Naive thymus-derived CD4-positive, alpha-beta T cell (primary cell): ENCODE measurements at regions of chr3 and their contacts with region 1.

Region 1: GRCh38 chr3:187738331-187739093 is 6.8 kb downstream of the BCL6 start:
- DNase-seq: peak in 8 of 9 donors; percentile 39 to 70 (median 66)
- ATAC-seq: peak; percentile 60
- H3K4me3 ChIP-seq: peak overlapping the region; percentile 79
- H3K4me3 Mint-ChIP-seq: peak overlapping the region; percentile 86 to 100 (median 98)
- H3K27ac ChIP-seq: peak overlapping the region; percentile 72
- H3K27ac Mint-ChIP-seq: peak overlapping the region; percentile 83 to 100 (median 100)
- H3K4me1 ChIP-seq: peaks cover 12 to 23% of the 10 kb centered on the region in 2 donors
- H3K4me1 Mint-ChIP-seq: peaks cover 27 to 63% (median 43%) of the 10 kb centered on the region in 7 donors
- H3K27me3 ChIP-seq: no peaks in the 10 kb centered on the region
- H3K27me3 Mint-ChIP-seq: peaks cover 0 to 3% (median 0%) of the 10 kb centered on the region in 5 donors

Region 2: GRCh38 chr3:187767266-187768012 is 28.9 kb after region 1 on chr3:
- CTCF ChIA-PET with region 1: no interaction called
- POLR2A ChIA-PET with region 1: no interaction called
- intact Hi-C with region 1: no loop called
- DNase-seq: no peak
- ATAC-seq: no peak
- H3K4me3 ChIP-seq: no peak overlapping the region
- H3K4me3 Mint-ChIP-seq: no peak overlapping the region
- H3K27ac ChIP-seq: no peak overlapping the region
- H3K27ac Mint-ChIP-seq: no peak overlapping the region
- H3K4me1 ChIP-seq: peaks cover 13 to 14% of the 10 kb centered on the region in 2 donors
- H3K4me1 Mint-ChIP-seq: peaks cover 10 to 41% (median 22%) of the 10 kb centered on the region in 7 donors
- H3K27me3 ChIP-seq: no peaks in the 10 kb centered on the region
- H3K27me3 Mint-ChIP-seq: no peaks in the 10 kb centered on the region

Region 3: DNA sequence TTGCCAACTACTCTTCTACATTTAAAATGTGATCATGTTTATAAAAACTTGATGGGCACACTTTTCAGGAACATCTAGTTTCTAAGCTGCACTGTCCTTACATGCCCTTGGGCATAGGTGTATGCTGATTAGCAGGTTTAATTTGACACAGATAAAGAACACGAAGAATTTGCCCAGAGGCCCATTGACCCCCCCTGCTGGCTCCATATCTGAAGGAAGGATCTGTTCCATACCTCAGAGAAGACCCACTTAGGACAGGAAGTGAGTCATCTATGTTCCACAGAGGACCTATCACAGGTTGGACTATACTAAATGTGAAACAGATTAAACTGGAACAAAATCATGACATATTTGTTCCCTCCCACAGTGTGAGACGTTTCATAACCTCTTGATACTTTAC is 322.6 kb after region 1 on chr3:
- CTCF ChIA-PET with region 1: interaction called, 11 read pairs
- POLR2A ChIA-PET with region 1: no interaction called
- intact Hi-C with region 1: loop called in 1 of 2 experiments (anchors 2 kb)
- DNase-seq: peak in 6 of 9 donors; percentile 4 to 60 (median 11)
- ATAC-seq: peak; percentile 86
- H3K4me3 ChIP-seq: no peak overlapping the region
- H3K4me3 Mint-ChIP-seq: peak overlapping the region in 1 of 10 donors; percentile 62
- H3K27ac ChIP-seq: no peak overlapping the region
- H3K27ac Mint-ChIP-seq: peak overlapping the region in 4 of 9 donors; percentile 19 to 74 (median 31)
- H3K4me1 ChIP-seq: peaks cover 3 to 8% of the 10 kb centered on the region in 2 donors
- H3K4me1 Mint-ChIP-seq: peaks cover 0 to 25% (median 13%) of the 10 kb centered on the region in 7 donors
- H3K27me3 ChIP-seq: no peaks in the 10 kb centered on the region
- H3K27me3 Mint-ChIP-seq: no peaks in the 10 kb centered on the region

Region 4: GRCh38 chr3:188358787-188359493 is 620.4 kb after region 1 on chr3:
- CTCF ChIA-PET with region 1: interaction called, 3 read pairs
- POLR2A ChIA-PET with region 1: interaction called, 3 read pairs
- intact Hi-C with region 1: loop called in 1 of 2 experiments (anchors 2 kb)
- DNase-seq: peak in 7 of 9 donors; percentile 11 to 56 (median 44)
- ATAC-seq: peak; percentile 85
- H3K4me3 ChIP-seq: peak overlapping the region; percentile 8
- H3K4me3 Mint-ChIP-seq: peak overlapping the region; percentile 53 to 82 (median 69)
- H3K27ac ChIP-seq: peak overlapping the region; percentile 45
- H3K27ac Mint-ChIP-seq: peak overlapping the region; percentile 31 to 95 (median 82)
- H3K4me1 ChIP-seq: peaks cover 31 to 32% of the 10 kb centered on the region in 2 donors
- H3K4me1 Mint-ChIP-seq: peaks cover 31 to 58% (median 47%) of the 10 kb centered on the region in 7 donors
- H3K27me3 ChIP-seq: no peaks in the 10 kb centered on the region
- H3K27me3 Mint-ChIP-seq: peaks cover 0 to 4% (median 0%) of the 10 kb centered on the region in 5 donors

Region 5: DNA sequence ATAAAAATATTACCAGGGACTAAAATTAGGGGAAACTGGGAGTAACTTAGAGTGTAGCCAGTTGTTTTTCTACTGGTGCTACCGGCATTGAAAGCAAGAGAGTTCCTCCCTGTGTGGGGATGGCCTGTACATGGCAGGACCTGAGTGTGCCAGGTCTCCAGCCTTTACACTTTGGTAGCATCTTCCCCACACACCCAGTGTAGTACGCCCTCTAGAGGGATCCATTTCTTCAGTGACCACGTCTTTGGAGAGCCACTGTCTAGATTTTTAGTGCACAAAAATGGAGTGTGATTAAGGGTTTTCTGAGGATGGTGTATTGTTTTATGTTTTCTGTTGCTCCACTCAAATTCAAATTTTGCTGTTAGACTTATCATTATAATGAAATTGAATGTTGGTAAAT is 926.3 kb after region 1 on chr3:
- CTCF ChIA-PET with region 1: interaction called, 3 read pairs
- POLR2A ChIA-PET with region 1: no interaction called
- intact Hi-C with region 1: loop called (anchors 1 to 2 kb)
- DNase-seq: no peak
- ATAC-seq: no peak
- H3K4me3 ChIP-seq: no peak overlapping the region
- H3K4me3 Mint-ChIP-seq: no peak overlapping the region
- H3K27ac ChIP-seq: no peak overlapping the region
- H3K27ac Mint-ChIP-seq: no peak overlapping the region
- H3K4me1 ChIP-seq: no peaks in the 10 kb centered on the region
- H3K4me1 Mint-ChIP-seq: peaks cover 0 to 2% (median 0%) of the 10 kb centered on the region in 7 donors
- H3K27me3 ChIP-seq: no peaks in the 10 kb centered on the region
- H3K27me3 Mint-ChIP-seq: no peaks in the 10 kb centered on the region

Region 6: DNA sequence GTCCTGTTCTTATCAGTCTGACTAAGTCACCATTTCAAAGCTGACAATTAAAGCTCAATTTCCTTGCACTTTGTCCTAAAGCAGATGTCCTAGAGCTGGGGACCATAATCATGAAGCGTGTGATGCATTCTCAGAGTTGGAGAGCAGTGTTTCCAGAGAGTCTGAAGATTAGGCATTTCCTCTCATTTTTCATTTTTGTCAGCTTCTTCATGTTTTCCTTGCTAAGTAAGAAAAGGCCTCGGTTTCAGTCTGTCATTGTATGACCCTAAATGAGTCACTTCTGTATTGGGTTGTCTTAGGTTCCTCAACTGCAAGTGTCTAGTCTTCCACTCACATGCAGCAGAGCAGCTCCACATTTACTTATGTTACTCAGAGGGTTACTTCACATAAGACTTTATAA is 1176.0 kb after region 1 on chr3:
- CTCF ChIA-PET with region 1: interaction called, 9 read pairs
- POLR2A ChIA-PET with region 1: interaction called, 6 read pairs
- intact Hi-C with region 1: loop called (anchors 1 kb)
- DNase-seq: no peak
- ATAC-seq: peak; percentile 70
- H3K4me3 ChIP-seq: no peak overlapping the region
- H3K4me3 Mint-ChIP-seq: peak overlapping the region in 1 of 10 donors; percentile 41
- H3K27ac ChIP-seq: no peak overlapping the region
- H3K27ac Mint-ChIP-seq: peak overlapping the region in 2 of 9 donors; percentile 28 to 34
- H3K4me1 ChIP-seq: peaks cover 16 to 18% of the 10 kb centered on the region in 2 donors
- H3K4me1 Mint-ChIP-seq: peaks cover 21 to 42% (median 32%) of the 10 kb centered on the region in 7 donors
- H3K27me3 ChIP-seq: no peaks in the 10 kb centered on the region
- H3K27me3 Mint-ChIP-seq: no peaks in the 10 kb centered on the region

Region 7: GRCh38 chr3:189148081-189148507 is 1409.6 kb after region 1 on chr3:
- CTCF ChIA-PET with region 1: interaction called, 163 read pairs
- POLR2A ChIA-PET with region 1: interaction called, 14 read pairs
- intact Hi-C with region 1: loop called (anchors 1 kb)
- DNase-seq: peak; percentile 22 to 61 (median 51)
- ATAC-seq: peak; percentile 85
- H3K4me3 ChIP-seq: no peak overlapping the region
- H3K4me3 Mint-ChIP-seq: no peak overlapping the region
- H3K27ac ChIP-seq: no peak overlapping the region
- H3K27ac Mint-ChIP-seq: peak overlapping the region in 1 of 9 donors; percentile 21
- H3K4me1 ChIP-seq: peaks cover 0 to 16% of the 10 kb centered on the region in 2 donors
- H3K4me1 Mint-ChIP-seq: peaks cover 6 to 35% (median 8%) of the 10 kb centered on the region in 7 donors
- H3K27me3 ChIP-seq: no peaks in the 10 kb centered on the region
- H3K27me3 Mint-ChIP-seq: peaks cover 0 to 20% (median 0%) of the 10 kb centered on the region in 5 donors